ENCODE measurements at regions of chr13 and their contacts with region 1.

Region 1: DNA sequence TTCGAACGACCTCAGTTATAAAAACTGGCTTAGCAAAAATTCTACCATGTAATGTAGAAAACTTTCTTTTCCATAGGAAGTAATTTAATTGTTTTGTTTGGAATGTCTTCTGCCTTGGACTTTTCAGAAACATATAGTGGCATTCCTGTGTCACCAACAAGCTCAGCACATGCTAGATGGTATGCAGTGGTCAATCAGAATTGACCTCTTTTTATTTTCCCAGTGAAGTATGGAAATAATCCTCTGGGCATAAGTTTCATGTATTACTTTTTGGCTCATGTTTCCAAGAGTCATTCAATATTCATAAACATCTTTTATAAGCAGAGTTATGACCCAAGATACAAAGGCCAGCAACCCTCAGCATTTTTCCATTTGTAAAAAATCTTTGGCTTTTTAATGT is 33.6 kb downstream of the NALCN start:
- DNase-seq: no peak
- H3K4me3 ChIP-seq: no peak overlapping the region
- H3K27ac ChIP-seq: no peak overlapping the region
- H3K4me1 ChIP-seq: no peaks in the 10 kb centered on the region
- H3K27me3 ChIP-seq: no peaks in the 10 kb centered on the region
- CTCF ChIP-seq: no peak

Region 2: GRCh38 chr13:100542826-100543156 is 839.9 kb before region 1 on chr13:
- CTCF ChIA-PET with region 1: no interaction called
- dilution Hi-C with region 1: no loop called
- in situ Hi-C with region 1: no loop called
- intact Hi-C with region 1: no loop called
- DNase-seq: peak; percentile 12
- H3K4me3 ChIP-seq: no peak overlapping the region
- H3K27ac ChIP-seq: no peak overlapping the region
- H3K4me1 ChIP-seq: peaks cover 10% of the 10 kb centered on the region
- H3K27me3 ChIP-seq: no peaks in the 10 kb centered on the region
- CTCF ChIP-seq: peak; percentile 50 to 56

Region 3: GRCh38 chr13:102670130-102670529 is 1287.4 kb after region 1 on chr13:
- CTCF ChIA-PET with region 1: interaction called, 24 read pairs
- dilution Hi-C with region 1: no loop called
- in situ Hi-C with region 1: no loop called
- intact Hi-C with region 1: no loop called
- DNase-seq: no peak
- H3K4me3 ChIP-seq: no peak overlapping the region
- H3K27ac ChIP-seq: no peak overlapping the region
- H3K4me1 ChIP-seq: no peaks in the 10 kb centered on the region
- H3K27me3 ChIP-seq: no peaks in the 10 kb centered on the region
- CTCF ChIP-seq: no peak